RWPE1 (cell line): ENCODE measurements at regions of chr5 and their contacts with region 1.

Region 1: GRCh38 chr5:88486431-88486830 is 217.8 kb upstream of the TMEM161B start:
- DNase-seq: no peak
- H3K27ac ChIP-seq: no peak overlapping the region
- CTCF ChIP-seq: no peak

Region 2: DNA sequence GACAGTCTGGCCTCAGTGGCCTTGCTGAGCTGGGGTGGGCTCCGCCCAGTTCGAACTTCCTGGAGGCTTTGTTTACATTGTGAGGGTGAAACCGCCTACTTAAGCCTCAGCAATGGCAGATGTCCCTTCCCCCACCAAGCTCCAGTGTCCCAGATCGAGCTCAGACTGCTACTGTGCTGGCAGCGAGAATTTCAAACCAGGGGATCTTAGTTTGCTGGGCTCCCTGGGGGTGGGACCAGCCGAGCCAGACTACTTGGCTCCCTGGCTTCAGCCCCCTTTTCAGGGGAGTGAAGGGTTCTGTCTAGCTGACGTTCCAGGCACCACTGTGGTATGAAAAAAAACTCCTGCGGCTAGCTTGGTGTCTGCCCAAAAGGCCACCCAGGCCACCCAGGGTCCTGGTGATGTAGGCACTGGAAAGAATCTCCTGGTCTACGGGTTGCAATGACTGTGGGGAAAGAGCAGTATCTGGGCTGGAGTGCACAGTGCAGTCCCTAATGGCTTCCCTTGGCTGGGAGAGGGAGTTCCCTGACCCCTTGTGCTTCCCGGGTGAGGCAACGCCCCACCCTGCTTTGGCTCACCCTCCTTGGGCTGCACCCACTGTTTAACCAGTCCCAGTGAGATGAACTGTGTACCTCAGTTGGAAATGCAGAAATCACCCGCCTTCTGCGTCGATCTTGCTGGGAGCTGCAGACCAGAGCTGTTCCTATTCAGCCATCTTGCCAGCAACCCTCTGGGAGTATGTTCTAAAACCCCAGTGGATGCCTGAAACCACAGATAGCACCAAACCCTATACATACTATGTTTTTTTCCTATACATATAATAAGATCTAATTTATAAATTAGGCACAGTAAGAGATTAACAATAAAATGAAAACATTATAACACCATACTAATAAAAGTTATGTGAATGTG is 313.3 kb before region 1 on chr5:
- CTCF ChIA-PET with region 1: no interaction called
- POLR2A ChIA-PET with region 1: interaction called, 15 read pairs
- DNase-seq: no peak
- H3K27ac ChIP-seq: no peak overlapping the region
- CTCF ChIP-seq: no peak

Region 3: DNA sequence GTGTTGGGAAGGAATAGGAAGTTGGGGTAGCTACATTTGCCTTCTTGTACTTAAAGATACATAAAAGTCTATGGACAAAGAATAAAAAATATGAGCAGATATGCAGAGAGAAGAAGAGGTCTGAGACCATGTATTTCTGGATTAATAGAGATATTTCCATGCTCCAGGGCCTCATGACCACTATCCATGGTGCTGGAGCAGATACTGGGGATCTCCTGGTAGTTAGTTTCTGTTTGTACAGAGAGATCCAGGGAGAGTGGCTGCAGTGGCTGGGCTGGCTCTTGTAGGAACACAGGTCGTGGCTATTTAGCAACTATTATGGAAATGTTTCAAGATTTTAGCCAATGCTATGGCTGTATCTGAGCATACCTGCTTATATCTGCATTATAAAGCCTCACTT is 33.6 kb before region 1 on chr5:
- CTCF ChIA-PET with region 1: no interaction called
- POLR2A ChIA-PET with region 1: no interaction called
- DNase-seq: no peak
- H3K27ac ChIP-seq: no peak overlapping the region
- CTCF ChIP-seq: no peak

Region 4: GRCh38 chr5:88509403-88509802 is 23.0 kb after region 1 on chr5:
- CTCF ChIA-PET with region 1: no interaction called
- POLR2A ChIA-PET with region 1: no interaction called
- DNase-seq: no peak
- H3K27ac ChIP-seq: no peak overlapping the region
- CTCF ChIP-seq: no peak